ENCODE measurements at regions of chr4 and their contacts with region 1.

Region 1: DNA sequence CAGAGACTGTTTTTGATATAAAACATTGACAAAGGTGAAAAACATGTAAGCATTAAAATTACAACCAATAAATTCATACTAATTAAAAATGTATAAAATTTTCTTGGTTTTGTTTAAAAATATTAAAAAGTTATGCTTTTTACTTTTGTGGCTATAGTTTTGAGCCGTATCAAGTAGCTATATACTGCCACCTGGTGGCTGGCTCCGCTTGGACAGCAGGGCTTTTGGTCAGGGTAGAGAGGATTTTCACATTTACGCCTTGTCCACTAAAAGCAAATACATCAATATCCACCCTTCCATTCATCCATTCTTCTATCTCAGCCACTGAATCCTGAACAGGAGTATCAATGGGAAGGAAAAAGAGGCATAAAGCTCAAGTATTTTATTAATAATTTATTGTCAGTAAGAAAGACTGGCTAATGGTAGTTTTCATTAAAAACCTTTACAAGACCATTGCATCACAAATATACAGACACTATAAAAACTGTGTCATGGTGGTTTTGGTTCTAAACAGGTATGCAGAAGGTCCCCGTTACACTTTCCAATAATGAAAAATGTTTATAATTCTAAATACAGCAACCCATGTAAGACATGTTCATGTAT is 32.1 kb upstream of the MTNR1A start:
- DNase-seq: no peak
- ATAC-seq: peak; percentile 78
- H3K4me3 ChIP-seq: no peak overlapping the region
- H3K27ac ChIP-seq: no peak overlapping the region
- H3K4me1 ChIP-seq: no peaks in the 10 kb centered on the region
- H3K27me3 ChIP-seq: no peaks in the 10 kb centered on the region
- CTCF ChIP-seq: peak; percentile 59 to 71 (median 70); a peak in 5 of 6 replicates
- EP300 ChIP-seq: no peak
- POLR2A ChIP-seq: no peak
- RAD21 ChIP-seq: peak; percentile 63

Region 2: DNA sequence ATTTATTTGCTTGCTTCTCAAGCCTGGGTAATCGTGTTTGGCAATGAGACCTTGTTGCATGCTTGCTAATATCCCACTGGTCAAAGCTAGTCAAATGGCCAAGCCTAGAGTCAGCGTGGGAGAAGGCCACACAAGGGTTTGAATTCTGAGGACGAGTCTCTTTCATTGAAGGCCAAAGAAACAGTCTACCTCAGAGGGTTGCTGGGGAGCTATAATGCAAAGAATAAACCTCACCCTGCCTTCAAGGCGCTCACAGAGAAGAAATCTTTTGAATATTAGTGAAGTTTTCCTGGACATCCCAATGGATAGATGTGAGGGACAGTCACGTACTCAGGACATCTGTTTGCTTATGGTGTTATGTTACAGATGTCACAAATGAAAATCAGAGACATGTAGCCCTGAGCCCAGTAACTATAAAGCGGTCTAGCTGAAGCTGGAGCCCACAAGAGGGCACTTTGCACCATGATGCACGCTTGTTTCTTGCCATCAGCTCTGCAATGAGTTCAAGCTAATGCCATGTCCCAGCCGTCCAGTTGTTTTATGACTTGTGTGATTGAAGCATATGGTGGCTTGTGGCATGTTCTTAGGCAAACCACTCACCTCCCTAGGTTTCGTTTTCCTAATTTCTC is 519.6 kb before region 1 on chr4:
- CTCF ChIA-PET with region 1: interaction called, 3 read pairs
- POLR2A ChIA-PET with region 1: no interaction called
- RAD21 ChIA-PET with region 1: interaction called, 4 read pairs
- SMC1A ChIA-PET with region 1: no interaction called
- in situ Hi-C with region 1: no loop called
- intact Hi-C with region 1: loop called (anchors 2 kb)
- DNase-seq: peak; percentile 25
- ATAC-seq: peak; percentile 94
- H3K4me3 ChIP-seq: no peak overlapping the region
- H3K27ac ChIP-seq: no peak overlapping the region
- H3K4me1 ChIP-seq: no peaks in the 10 kb centered on the region
- H3K27me3 ChIP-seq: peaks cover 0 to 3% of the 10 kb centered on the region in 2 experiments; a peak in 2 of 4 replicates
- CTCF ChIP-seq: peak; percentile 54 to 55 (median 55); a peak in 5 of 6 replicates
- EP300 ChIP-seq: no peak
- POLR2A ChIP-seq: no peak
- RAD21 ChIP-seq: peak; percentile 60

Region 3: DNA sequence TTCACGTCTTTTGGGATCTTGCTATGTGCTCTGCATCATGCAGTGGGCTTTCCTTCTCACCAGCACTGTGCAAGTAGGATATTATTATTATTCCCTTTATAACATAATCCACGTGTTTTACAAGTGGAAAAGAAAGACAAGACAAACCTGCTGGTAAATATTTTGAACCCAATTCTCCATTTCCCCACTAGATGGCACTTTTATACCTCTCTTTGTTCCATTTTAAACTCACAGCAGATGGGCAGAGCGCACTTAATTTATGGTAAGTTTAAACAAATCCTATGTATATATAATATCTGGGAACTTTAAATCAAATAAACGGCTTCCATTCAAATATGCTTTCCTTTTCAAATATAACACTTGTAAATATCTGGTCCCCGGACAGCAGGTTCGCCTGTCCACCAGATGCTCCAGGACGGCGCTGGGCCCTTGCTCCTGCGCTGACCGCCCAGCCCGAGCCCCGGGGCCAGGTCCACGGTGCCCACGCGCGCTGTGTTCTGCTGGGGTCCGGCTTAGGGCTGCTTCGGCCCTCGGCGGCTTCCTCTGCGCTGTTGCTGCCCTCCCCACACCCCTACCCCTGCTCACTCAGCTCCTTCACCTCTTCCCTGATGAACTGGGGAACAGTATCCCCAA is 290.4 kb before region 1 on chr4:
- CTCF ChIA-PET with region 1: interaction called, 34 read pairs
- POLR2A ChIA-PET with region 1: no interaction called
- RAD21 ChIA-PET with region 1: interaction called, 3 read pairs
- SMC1A ChIA-PET with region 1: interaction called, 7 read pairs
- in situ Hi-C with region 1: loop called (anchors 5 kb)
- intact Hi-C with region 1: loop called (anchors 1 kb)
- DNase-seq: no peak
- ATAC-seq: peak; percentile 49
- H3K4me3 ChIP-seq: no peak overlapping the region
- H3K27ac ChIP-seq: no peak overlapping the region
- H3K4me1 ChIP-seq: no peaks in the 10 kb centered on the region
- H3K27me3 ChIP-seq: no peaks in the 10 kb centered on the region; a peak in 1 of 4 replicates
- CTCF ChIP-seq: peak; percentile 44 to 64 (median 56); a peak in 4 of 6 replicates
- EP300 ChIP-seq: no peak
- POLR2A ChIP-seq: no peak
- RAD21 ChIP-seq: peak; percentile 84

Region 4: DNA sequence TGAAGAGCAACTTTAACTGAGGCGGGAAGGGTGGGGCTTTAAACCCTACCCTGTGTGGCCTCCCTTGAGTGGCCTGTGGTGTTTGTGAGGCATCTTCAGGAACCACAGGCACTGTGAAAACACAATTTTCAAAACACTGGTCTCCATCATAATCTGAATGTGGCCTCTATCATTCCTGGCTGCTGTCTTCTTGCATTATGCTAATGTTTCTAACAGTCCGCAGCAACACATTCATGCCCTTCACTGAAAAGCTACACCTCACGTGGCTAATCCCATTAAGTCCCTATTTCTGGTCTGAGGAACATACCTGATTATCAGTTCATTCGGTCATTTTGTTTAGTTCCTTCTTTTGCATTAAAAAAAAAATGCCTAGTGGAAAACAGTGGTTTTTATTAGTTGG is 227.0 kb before region 1 on chr4:
- CTCF ChIA-PET with region 1: interaction called, 3 read pairs
- POLR2A ChIA-PET with region 1: no interaction called
- RAD21 ChIA-PET with region 1: no interaction called
- SMC1A ChIA-PET with region 1: no interaction called
- in situ Hi-C with region 1: no loop called
- intact Hi-C with region 1: loop called (anchors 5 kb)
- DNase-seq: no peak
- ATAC-seq: no peak
- H3K4me3 ChIP-seq: no peak overlapping the region
- H3K27ac ChIP-seq: no peak overlapping the region
- H3K4me1 ChIP-seq: no peaks in the 10 kb centered on the region
- H3K27me3 ChIP-seq: no peaks in the 10 kb centered on the region
- CTCF ChIP-seq: no peak
- EP300 ChIP-seq: no peak
- POLR2A ChIP-seq: no peak
- RAD21 ChIP-seq: no peak

Region 5: DNA sequence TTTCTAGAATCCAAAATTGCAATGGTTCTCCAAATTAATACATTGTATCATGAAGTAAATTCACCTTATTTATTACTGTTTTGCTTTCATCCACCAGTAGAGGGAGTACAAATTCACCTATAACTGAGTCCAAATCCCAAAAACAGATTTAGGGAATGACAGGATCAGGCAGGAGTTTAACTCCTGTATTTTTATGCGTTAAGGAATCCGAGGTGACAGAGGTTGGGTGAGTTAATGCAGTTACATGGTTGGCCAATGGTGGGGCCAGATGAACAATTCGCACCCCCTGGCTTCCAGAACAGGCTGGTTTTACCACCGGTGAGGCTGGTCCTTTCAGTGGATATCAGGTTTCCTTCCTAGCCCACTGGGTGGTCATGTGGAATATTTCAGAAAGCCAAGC is 114.6 kb before region 1 on chr4:
- CTCF ChIA-PET with region 1: interaction called, 5 read pairs
- POLR2A ChIA-PET with region 1: no interaction called
- RAD21 ChIA-PET with region 1: no interaction called
- SMC1A ChIA-PET with region 1: no interaction called
- in situ Hi-C with region 1: no loop called
- intact Hi-C with region 1: loop called (anchors 10 kb)
- DNase-seq: no peak
- ATAC-seq: no peak
- H3K4me3 ChIP-seq: no peak overlapping the region
- H3K27ac ChIP-seq: no peak overlapping the region
- H3K4me1 ChIP-seq: no peaks in the 10 kb centered on the region
- H3K27me3 ChIP-seq: no peaks in the 10 kb centered on the region
- CTCF ChIP-seq: peak in 2 of 3 experiments; percentile 8 to 14; a peak in 1 of 6 replicates
- EP300 ChIP-seq: no peak
- POLR2A ChIP-seq: no peak
- RAD21 ChIP-seq: no peak

Region 6: GRCh38 chr4:186570193-186570996 is 17.1 kb before region 1 on chr4:
- CTCF ChIA-PET with region 1: interaction called, 11 read pairs
- POLR2A ChIA-PET with region 1: no interaction called
- RAD21 ChIA-PET with region 1: interaction called, 4 read pairs
- SMC1A ChIA-PET with region 1: no interaction called
- in situ Hi-C with region 1: no loop called
- intact Hi-C with region 1: no loop called
- DNase-seq: no peak
- ATAC-seq: no peak
- H3K4me3 ChIP-seq: no peak overlapping the region
- H3K27ac ChIP-seq: no peak overlapping the region
- H3K4me1 ChIP-seq: no peaks in the 10 kb centered on the region
- H3K27me3 ChIP-seq: no peaks in the 10 kb centered on the region
- CTCF ChIP-seq: no peak
- EP300 ChIP-seq: no peak
- POLR2A ChIP-seq: no peak
- RAD21 ChIP-seq: no peak

Region 7: DNA sequence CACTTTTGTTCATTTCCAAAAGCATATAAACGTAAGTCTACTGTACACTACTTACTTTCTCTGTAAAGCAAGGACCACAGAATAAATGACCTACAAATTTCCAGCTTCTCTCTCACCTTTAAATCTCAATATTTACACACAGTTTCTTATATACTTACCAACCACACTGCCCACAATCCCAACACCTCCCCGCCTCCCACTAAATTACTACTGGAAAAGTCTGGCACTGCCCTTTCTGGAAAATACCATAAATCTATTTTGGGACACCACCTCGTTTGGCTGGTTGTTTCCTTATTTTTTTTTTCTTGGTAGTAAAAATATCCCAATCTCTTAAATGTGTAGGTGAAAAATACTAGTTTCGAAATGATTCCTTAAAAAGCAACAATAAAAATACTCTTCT is 116.5 kb after region 1 on chr4:
- CTCF ChIA-PET with region 1: no interaction called
- POLR2A ChIA-PET with region 1: no interaction called
- RAD21 ChIA-PET with region 1: no interaction called
- SMC1A ChIA-PET with region 1: no interaction called
- in situ Hi-C with region 1: no loop called
- intact Hi-C with region 1: no loop called
- DNase-seq: no peak
- ATAC-seq: no peak
- H3K4me3 ChIP-seq: no peak overlapping the region
- H3K27ac ChIP-seq: no peak overlapping the region
- H3K4me1 ChIP-seq: no peaks in the 10 kb centered on the region
- H3K27me3 ChIP-seq: no peaks in the 10 kb centered on the region
- CTCF ChIP-seq: no peak
- EP300 ChIP-seq: no peak
- POLR2A ChIP-seq: no peak
- RAD21 ChIP-seq: no peak